BJ (cell line): ENCODE measurements at regions of chr7 and their contacts with region 1.

Region 1: DNA sequence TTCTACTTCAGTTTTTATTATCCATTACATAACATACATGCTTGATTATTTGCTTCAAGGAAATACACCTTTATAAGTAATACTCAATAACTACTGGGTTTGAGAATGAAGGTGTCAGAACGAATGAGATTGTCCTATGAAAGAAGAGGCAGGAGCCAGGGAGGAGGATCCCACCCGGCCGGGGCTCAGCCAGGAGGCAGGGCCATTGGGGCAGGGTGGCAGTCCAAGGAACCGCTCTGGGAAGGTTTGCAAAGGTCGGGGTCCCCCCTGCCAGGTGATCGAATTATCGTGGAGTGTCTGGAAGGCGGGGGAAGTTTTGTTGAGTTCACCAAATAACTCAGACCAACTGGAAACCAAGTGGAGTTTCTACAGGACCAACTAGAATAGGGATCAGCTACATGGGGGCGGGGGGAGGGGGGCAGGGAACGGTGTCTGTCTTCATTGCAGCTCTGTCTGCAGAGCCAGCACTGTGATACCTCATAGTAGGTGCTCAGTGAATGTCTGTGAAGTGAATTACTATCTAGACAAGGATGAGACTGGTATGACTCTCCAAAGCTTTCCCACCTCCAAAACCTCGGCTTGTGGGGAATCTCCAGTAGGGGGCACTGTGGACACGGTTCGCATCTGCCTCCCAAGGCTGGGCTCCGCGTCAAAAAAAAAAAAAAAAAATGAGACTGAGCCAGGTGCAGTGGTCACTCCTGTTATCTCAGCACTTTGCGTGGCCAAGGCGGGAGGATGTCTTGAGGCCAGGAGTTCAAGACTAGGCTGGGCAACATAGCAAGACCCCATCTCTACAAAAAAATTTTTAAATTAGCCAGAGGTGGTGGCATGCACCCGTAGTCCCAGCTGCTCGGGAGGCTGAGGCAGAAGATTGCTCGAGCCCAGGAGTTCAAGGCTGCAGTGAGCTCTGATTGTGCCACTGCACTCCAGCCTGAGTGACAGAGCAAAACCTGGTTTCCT is 9.4 kb downstream of the TRIM56 start:
- DNase-seq: no peak
- H3K4me3 ChIP-seq: no peak overlapping the region
- H3K27me3 ChIP-seq: no peaks in the 10 kb centered on the region
- CTCF ChIP-seq: peak; percentile 79

Region 2: DNA sequence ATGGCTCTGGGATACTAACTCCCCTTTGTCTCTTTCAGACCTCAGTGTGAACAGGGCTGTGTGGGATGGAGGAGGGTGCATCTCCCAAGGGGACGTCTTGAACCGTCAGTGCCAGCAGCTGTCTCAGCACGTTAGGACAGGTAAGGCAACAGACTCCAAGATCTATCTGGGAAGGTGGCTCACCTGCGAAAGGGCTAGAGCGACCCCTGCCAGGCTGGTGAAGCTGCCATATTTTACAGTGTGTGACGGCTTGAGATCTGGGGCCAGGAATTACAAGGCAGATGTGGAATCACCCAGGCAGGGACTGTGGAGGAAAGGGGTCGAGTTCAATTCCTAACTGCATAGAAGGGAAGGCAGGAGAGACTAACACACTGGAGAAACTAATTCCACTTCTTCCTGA is 63.6 kb before region 1 on chr7:
- CTCF ChIA-PET with region 1: no interaction called
- POLR2A ChIA-PET with region 1: no interaction called
- DNase-seq: no peak
- H3K4me3 ChIP-seq: no peak overlapping the region
- H3K27me3 ChIP-seq: peaks cover 1% of the 10 kb centered on the region; the same call in 1 of the 2 replicates
- CTCF ChIP-seq: no peak

Region 3: DNA sequence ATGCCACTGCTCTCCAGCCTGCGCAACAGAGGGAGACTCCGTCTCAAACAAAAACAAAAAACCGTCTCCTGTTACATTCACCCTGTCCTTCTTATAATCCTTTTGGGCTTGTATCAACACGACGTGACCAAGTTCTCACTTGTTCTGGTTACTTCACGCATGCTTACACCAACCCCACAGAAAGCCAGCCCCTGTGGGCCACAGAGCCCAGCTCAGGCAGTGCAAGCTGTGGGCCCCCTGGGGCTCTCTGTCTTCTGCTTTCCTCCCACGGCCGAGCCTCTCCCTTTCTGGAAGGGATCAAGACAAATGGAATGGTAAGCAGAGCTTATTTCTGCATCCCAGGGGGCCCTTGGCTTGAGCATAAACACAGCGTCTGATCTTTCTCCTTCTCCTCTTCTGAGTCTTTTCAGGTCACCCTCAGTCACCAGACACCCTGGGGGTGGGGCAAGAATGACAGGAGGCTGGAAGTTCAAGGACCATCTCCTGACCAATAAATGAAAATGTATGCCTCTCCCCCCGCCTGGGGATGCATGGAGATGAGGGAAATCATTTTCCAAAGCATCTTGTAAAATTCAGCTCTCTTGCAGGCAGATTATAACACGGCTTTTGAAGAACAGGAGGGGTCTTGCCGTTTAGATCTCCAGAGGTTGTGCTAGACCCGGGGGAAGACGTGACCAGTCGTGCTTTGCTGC is 28.4 kb before region 1 on chr7:
- CTCF ChIA-PET with region 1: no interaction called
- POLR2A ChIA-PET with region 1: no interaction called
- DNase-seq: no peak
- H3K4me3 ChIP-seq: no peak overlapping the region
- H3K27me3 ChIP-seq: peaks cover 9% of the 10 kb centered on the region
- CTCF ChIP-seq: no peak

Region 4: DNA sequence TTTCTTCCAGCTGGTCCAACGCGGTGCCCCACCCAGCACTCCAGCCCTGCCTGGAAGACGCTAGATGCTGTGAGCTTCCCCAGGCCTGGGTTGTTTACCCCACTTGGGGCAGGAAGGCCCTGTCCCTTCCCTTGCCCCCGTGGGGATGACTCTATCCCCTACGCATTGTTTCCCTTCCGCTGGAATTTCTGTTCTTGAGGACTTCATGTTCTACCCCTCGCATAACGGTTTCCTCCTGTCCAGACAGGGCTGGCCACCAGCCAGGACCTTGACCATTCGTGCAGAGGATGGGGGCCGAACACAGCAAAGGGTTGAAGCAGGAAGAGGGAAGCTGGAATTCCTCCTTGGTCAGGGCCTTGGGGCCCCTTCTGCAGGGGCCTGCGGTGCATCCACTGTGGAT is 17.5 kb after region 1 on chr7:
- CTCF ChIA-PET with region 1: interaction called, 11 read pairs
- POLR2A ChIA-PET with region 1: no interaction called
- DNase-seq: no peak
- H3K4me3 ChIP-seq: no peak overlapping the region
- H3K27me3 ChIP-seq: no peaks in the 10 kb centered on the region
- CTCF ChIP-seq: no peak